ENCODE measurements at regions of chr4 and their contacts with region 1.

Region 1: DNA sequence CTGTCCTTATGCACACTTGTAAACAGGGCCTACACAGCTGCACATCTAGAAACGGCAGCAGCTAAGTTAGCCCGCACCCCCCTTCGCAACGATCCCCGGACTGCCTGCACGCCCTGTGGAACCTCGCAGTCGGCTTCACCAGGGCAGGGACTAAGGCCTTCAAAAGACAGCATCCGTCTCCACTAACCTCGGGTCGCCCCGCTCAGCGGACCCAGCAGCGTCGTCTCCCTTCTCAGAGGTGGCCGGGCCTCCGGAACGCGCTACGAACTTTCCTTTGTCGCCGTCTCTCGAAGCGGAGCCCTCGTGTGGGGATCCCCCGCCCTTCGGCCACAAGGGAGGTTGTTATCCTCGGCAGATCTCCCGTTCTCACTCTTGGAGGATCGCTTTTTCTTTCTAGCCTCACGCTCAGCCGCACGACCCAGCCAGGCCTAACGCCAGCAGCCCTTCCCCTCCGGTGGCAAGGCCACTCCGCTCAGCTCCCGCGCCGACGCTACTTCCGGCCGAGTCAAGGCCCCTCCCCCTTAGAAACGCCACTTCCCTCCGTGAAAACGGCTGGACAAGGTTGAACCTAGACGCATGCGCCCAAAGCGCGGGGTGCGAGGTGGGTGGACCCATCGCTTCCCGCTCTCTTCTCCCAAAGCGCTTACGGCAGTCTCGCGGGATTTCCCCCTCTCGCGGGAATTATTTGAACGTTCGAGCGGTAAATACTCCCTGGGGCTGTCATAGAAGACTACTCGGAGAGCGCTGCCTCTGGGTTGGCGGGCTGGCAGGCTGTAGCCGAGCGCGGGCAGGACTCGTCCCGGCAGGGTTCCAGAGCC is at the starts of genes DCAF16 and NCAPG:
- DNase-seq: peak; percentile 98
- ATAC-seq: peak; percentile 96
- H3K4me3 ChIP-seq: peak within 1 kb of the TSS; percentile 87 to 93 (median 90)
- H3K27ac ChIP-seq: peak within 1 kb of the TSS; percentile 97
- H3K4me1 ChIP-seq: peaks cover 47% of the 10 kb centered on the region
- H3K27me3 ChIP-seq: no peaks in the 10 kb centered on the region; a peak in 1 of 5 replicates
- CTCF ChIP-seq: peak; percentile 6; the same call in 1 of the 2 replicates
- EP300 ChIP-seq: 0 out of 4 replicates have a peak, but pooled peaks of 1 of the 2 experiments have one; percentile 7
- POLR2A ChIP-seq: peak; percentile 95 to 97
- RAD21 ChIP-seq: peak; percentile 52
- total RNA-seq, gene DCAF16: 41.9 and 46.1 TPM in 2 replicates
- total RNA-seq, gene NCAPG: 61.9 and 108 TPM in 2 replicates

Region 2: DNA sequence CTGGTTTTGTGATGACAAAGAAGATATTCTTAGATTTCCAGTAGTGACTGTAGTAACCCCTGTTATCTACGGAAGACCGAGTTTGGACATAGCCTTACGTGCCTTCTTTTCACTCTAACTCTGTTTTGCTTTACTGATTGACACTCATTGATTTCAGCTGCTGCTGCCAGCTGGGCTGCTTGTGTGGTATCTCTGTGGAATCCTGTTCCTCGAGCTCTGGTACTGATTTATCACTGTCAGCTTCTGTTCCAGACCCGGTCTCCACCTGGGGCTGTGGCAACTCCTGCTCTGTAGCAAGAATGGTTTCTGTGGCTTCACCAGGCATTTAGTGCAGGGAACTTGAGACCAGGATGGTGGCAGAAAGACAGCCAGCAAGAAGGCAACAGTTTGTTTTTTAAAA is 258.0 kb before region 1 on chr4:
- CTCF ChIA-PET with region 1: interaction called, 5 read pairs
- POLR2A ChIA-PET with region 1: no interaction called
- in situ Hi-C with region 1: loop called (anchors 10 kb)
- intact Hi-C with region 1: loop called (anchors 2 kb)
- DNase-seq: no peak
- ATAC-seq: no peak
- H3K4me3 ChIP-seq: no peak overlapping the region
- H3K27ac ChIP-seq: no peak overlapping the region
- H3K4me1 ChIP-seq: peaks cover 50% of the 10 kb centered on the region
- H3K27me3 ChIP-seq: no peaks in the 10 kb centered on the region
- CTCF ChIP-seq: no peak
- EP300 ChIP-seq: no peak
- POLR2A ChIP-seq: no peak
- RAD21 ChIP-seq: no peak

Region 3: DNA sequence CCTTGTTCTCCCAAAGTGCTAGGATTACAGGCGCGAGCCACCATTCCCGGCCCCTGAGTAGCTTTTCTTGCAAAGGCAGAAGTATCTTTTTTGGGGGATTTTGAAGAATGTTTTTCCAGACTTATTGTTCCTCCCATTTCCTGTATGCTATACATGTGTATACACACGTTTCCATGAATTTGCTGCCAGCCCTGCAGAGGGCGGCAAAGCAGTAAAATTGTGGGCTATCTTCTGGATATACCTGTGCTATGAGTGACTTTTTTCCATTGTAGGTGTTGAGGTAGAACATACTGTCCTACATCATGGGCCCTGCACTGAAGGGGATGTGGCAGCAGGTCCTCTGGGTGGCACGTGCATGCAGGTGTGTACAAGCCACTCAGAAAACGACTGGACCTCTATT is 213.0 kb before region 1 on chr4:
- CTCF ChIA-PET with region 1: interaction called, 4 read pairs
- POLR2A ChIA-PET with region 1: no interaction called
- in situ Hi-C with region 1: no loop called
- intact Hi-C with region 1: loop called (anchors 5 kb)
- DNase-seq: no peak
- ATAC-seq: peak; percentile 92
- H3K4me3 ChIP-seq: no peak overlapping the region
- H3K27ac ChIP-seq: no peak overlapping the region
- H3K4me1 ChIP-seq: no peaks in the 10 kb centered on the region
- H3K27me3 ChIP-seq: no peaks in the 10 kb centered on the region
- CTCF ChIP-seq: peak; percentile 57
- EP300 ChIP-seq: no peak
- POLR2A ChIP-seq: no peak
- RAD21 ChIP-seq: peak; percentile 29; the same call in 1 of the 2 replicates

Region 4: GRCh38 chr4:17898553-17899055 is 88.1 kb after region 1 on chr4:
- CTCF ChIA-PET with region 1: no interaction called
- POLR2A ChIA-PET with region 1: no interaction called
- in situ Hi-C with region 1: no loop called
- intact Hi-C with region 1: no loop called
- DNase-seq: no peak
- ATAC-seq: no peak
- H3K4me3 ChIP-seq: no peak overlapping the region
- H3K27ac ChIP-seq: no peak overlapping the region
- H3K4me1 ChIP-seq: no peaks in the 10 kb centered on the region
- H3K27me3 ChIP-seq: no peaks in the 10 kb centered on the region
- CTCF ChIP-seq: no peak
- EP300 ChIP-seq: no peak
- POLR2A ChIP-seq: no peak
- RAD21 ChIP-seq: no peak

Region 5: DNA sequence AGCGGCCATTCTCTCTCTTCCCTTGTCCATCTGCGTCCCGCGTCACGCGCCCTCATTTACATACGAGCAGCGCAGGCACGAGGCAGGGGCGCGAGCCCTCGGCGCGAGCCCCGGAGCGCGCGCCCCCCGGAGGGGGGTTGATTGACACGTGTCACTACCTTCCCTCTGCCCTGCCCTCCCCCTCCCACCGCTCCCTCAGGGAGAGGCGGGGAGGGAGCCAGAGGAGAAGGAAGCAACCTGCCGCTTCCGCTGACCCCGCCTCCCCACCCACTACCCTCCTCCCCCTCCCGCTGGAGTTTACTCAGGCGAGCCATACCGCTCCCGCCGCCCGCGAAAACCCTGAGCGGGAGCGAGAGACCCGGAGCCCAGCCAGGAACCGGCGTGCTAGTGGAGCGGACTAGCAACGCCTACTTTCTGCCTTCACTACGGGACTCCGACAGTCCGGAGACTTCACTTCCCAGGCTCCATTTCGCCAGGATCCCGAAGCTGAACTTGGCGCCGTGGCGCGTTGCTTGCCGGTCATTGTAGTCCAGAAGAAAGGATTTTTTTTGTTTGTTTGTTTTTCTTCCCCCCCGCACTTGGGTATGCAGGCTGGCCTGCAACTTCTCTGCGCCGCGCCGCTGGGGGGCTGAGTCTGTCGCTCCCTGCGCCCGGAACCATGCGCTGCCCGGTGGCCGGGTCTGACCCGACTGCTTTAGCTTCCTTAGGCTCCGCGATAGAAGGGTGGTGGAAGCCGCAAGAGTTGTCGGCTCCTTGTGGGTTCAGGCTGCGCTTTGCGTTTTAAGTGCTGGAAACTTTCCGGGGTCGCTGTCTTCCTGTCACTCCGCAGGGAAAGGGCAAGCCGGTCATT is 211.5 kb after region 1 on chr4 and contains the start of gene LCORL:
- CTCF ChIA-PET with region 1: no interaction called
- POLR2A ChIA-PET with region 1: interaction called, 7 read pairs
- in situ Hi-C with region 1: loop called (anchors 10 kb)
- intact Hi-C with region 1: loop called (anchors 1 kb)
- DNase-seq: peak; percentile 96
- ATAC-seq: peak; percentile 90
- H3K4me3 ChIP-seq: peak within 1 kb of the TSS; percentile 89 to 97 (median 93)
- H3K27ac ChIP-seq: peak within 1 kb of the TSS; percentile 96
- H3K4me1 ChIP-seq: peaks cover 21% of the 10 kb centered on the region
- H3K27me3 ChIP-seq: peaks cover 0 to 15% of the 10 kb centered on the region in 2 experiments; a peak in 1 of 5 replicates
- CTCF ChIP-seq: peak; percentile 66
- EP300 ChIP-seq: no peak
- POLR2A ChIP-seq: peak; percentile 19 to 57; a peak in 3 of 4 replicates
- RAD21 ChIP-seq: no peak
- total RNA-seq, gene LCORL: 14.5 and 16.5 TPM in 2 replicates

Region 6: GRCh38 chr4:18366892-18367291 is 556.4 kb after region 1 on chr4:
- CTCF ChIA-PET with region 1: no interaction called
- POLR2A ChIA-PET with region 1: no interaction called
- in situ Hi-C with region 1: loop called (anchors 10 kb)
- intact Hi-C with region 1: no loop called
- DNase-seq: peak; percentile 24
- ATAC-seq: peak; percentile 97
- H3K4me3 ChIP-seq: no peak overlapping the region
- H3K27ac ChIP-seq: no peak overlapping the region
- H3K4me1 ChIP-seq: no peaks in the 10 kb centered on the region
- H3K27me3 ChIP-seq: no peaks in the 10 kb centered on the region
- CTCF ChIP-seq: peak; percentile 78
- EP300 ChIP-seq: no peak
- POLR2A ChIP-seq: no peak
- RAD21 ChIP-seq: 0 out of 2 replicates have a peak, but pooled peaks have one; percentile 40

Region 7: GRCh38 chr4:18645351-18645750 is 834.9 kb after region 1 on chr4:
- CTCF ChIA-PET with region 1: no interaction called
- POLR2A ChIA-PET with region 1: no interaction called
- in situ Hi-C with region 1: no loop called
- intact Hi-C with region 1: no loop called
- DNase-seq: no peak
- ATAC-seq: no peak
- H3K4me3 ChIP-seq: no peak overlapping the region
- H3K27ac ChIP-seq: no peak overlapping the region
- H3K4me1 ChIP-seq: no peaks in the 10 kb centered on the region
- H3K27me3 ChIP-seq: no peaks in the 10 kb centered on the region
- CTCF ChIP-seq: no peak
- EP300 ChIP-seq: no peak
- POLR2A ChIP-seq: no peak
- RAD21 ChIP-seq: no peak

Measured in HepG2 (cell line).